ENCODE measurements at regions of chr14 and their contacts with region 1.

Region 1: GRCh38 chr14:59576332-59577294 is at the start of gene CCDC175:
- DNase-seq: peak; percentile 46
- H3K4me3 ChIP-seq: peak within 1 kb of the TSS in 1 of 3 experiments; percentile 16
- H3K27ac ChIP-seq: no peak within 1 kb of the TSS
- H3K4me1 ChIP-seq: peaks cover 5% of the 10 kb centered on the region
- H3K27me3 ChIP-seq: peaks cover 4% of the 10 kb centered on the region
- CTCF ChIP-seq: peak; percentile 62 to 74
- total RNA-seq, gene CCDC175: not detected

Region 2: DNA sequence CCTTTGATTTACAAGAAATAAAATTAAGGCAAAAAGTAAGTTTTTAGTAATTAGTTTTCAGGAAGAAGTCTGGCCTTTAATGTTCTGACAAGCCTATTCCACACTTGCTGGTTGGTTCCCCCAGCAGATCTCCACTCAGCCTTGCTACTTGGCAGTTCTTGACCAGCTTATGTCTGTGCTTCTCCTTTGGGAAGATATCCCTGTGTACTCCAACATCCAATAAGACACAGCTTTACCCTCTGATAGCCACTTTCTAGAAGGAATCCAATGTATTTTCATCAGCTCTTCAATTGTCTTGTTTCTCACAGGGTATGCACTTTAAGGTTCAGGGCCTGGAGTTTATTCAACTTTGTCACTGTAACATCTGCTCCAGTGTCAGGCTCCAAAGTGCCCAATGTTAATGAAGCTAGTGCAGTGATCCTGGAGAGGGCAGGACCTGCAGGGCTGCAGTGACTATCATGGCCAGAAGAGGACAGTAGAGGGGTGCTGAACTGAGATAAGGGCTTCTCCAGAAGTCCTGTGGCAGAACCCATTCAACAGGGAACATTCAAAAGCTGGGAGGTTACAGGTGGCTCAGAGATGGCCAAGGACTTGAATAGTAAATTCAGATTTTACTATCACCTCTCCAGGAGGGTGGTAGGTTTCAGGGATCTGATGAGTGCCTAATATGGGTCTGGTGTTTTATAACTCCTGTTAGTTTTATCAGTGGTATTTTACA is 69.4 kb before region 1 on chr14:
- CTCF ChIA-PET with region 1: interaction called, 4 read pairs
- dilution Hi-C with region 1: no loop called
- in situ Hi-C with region 1: no loop called
- intact Hi-C with region 1: loop called (anchors 1 kb)
- DNase-seq: peak; percentile 34
- H3K4me3 ChIP-seq: no peak overlapping the region
- H3K27ac ChIP-seq: no peak overlapping the region
- H3K4me1 ChIP-seq: no peaks in the 10 kb centered on the region
- H3K27me3 ChIP-seq: peaks cover under 1% of the 10 kb centered on the region
- CTCF ChIP-seq: peak; percentile 98 to 99

Measured in mammary epithelial cell (primary cell).